AG04450 (cell line): ENCODE measurements at regions of chr15 and their contacts with region 1.

Region 1: DNA sequence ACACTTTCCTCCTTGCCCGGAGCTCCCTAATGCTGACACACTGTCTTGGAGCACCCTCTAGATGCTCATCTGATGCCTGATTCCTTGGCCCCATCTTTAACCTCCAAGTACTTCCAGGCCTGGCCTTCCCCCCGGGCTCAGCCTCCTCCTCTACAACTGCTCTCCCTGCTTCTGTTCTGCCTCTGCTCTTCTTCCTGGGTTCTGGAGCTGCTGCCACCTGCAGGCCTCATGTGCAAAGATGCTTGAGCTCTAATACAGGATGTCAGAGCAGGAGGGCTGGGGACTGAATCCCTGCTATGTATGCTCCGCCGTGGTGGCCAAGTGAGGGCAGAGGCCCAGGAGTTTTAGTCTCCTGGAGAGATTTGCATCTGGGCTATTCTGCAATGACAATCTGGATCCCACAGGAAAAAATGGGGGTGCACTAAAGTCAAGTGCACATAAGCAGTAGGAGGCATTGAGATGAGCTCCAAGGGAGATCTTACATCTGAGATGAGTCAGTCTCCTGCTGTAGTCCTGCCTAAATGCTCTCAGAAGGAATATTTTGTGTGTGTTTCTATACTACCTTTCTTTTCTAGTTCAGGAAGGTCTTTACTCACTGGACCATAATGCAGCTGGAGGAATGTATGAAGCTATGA is 296.3 kb downstream of the UACA start:
- DNase-seq: peak; percentile 26
- H3K4me3 ChIP-seq: no peak overlapping the region
- H3K27ac ChIP-seq: no peak overlapping the region
- H3K27me3 ChIP-seq: peaks cover 22% of the 10 kb centered on the region
- CTCF ChIP-seq: peak; percentile 78

Region 2: DNA sequence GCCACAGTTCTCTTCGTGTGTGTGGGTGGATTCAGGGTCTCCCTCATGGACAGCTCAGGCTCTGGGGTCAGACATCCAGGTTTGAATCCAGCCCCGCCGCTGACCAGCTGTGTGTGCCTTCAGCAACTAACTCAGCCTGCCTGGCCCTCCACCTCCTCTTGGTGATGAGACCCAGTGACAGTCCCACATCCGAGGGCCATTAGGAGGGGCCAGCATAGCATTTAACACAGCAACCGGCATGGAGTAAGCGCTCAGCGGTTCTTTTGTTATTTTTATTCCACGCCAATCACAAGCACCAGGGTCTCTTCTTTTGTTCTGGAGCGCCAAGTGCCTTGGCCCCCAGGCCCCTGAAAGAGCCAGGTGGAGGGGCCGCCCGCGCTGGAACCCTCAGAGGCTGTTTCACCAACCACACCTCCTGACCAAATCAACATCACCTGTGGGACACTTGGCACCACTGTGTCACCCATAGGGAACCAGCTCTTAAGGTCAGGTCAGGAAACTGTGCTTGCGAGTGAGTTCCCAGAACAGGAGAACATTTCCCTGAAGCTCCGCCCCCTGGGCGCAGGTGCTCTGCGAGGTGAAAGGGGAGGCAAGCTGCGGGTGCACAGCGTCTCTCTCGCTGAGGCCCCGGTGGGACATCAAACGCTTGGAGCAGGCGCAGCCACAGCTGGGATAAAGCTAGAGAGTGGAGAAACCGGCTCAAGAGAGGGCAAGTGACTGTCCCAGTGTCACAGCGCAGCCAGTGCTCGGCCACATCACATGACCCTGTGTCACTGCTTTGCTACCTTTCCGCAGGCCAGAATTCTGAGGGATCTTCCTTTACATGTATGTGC is 15.0 kb before region 1 on chr15:
- CTCF ChIA-PET with region 1: interaction called, 22 read pairs
- POLR2A ChIA-PET with region 1: no interaction called
- DNase-seq: no peak
- H3K4me3 ChIP-seq: no peak overlapping the region
- H3K27ac ChIP-seq: no peak overlapping the region
- H3K27me3 ChIP-seq: peaks cover 36% of the 10 kb centered on the region
- CTCF ChIP-seq: no peak